Activated CD4-positive, alpha-beta T cell treated with anti-CD3 and anti-CD28 coated beads for 36 hours (primary cell): ENCODE measurements at regions of chr6 and their contacts with region 1.

Region 1: DNA sequence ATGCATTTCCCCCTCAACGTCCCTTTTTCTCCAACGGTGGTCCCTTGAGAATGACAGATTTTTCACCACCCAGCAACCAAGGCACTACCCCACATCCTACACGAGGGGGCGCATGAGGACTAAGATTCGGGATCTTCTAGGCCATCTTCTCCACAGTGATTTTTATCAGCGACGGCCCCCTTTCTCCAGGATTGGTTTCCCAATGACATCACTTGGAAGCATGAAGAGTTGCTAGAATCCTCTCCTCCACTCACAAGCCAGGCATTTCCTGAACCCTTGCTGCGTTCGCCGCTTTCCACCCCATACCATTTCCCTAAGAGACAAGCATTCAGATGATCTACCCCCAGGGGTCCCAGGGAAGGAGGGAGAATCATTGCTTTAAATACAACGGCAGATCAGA is 252.0 kb downstream of the HIVEP2 start:
- DNase-seq: peak; percentile 79
- ATAC-seq: peak; percentile 75
- H3K4me3 Mint-ChIP-seq: no peak overlapping the region
- H3K27ac Mint-ChIP-seq: peak overlapping the region; percentile 62
- H3K4me1 Mint-ChIP-seq: peaks cover 27% of the 10 kb centered on the region
- H3K27me3 Mint-ChIP-seq: no peaks in the 10 kb centered on the region

Region 2: DNA sequence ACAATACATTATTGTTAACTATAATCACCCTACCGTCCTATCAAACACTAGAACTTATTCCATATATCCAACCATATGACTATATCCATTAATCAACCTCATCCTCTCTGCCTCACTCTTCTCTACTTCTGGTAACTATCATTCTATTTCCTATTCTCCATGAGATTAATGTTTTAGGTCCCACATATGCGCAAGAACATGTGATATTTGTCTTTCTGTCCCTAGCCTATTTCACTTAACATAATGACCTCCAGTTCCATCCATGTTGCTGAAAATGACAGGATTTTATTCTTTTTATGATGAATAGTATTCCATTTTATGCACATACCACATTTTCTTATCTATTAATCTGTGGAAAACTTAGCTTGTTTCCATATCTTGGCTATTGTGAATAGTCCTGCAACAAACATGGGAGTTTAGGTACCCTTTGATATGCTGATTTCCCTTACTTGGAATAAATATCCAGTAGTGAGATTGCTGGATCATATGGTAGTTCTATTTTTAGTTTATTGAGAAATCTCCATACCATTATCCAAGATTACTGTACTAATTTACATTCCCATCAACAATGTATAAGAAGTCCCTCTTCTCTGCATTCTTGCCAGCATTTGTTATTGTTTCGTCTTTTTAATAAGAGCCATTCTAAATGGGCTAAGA is 849.6 kb before region 1 on chr6:
- CTCF ChIA-PET with region 1: no interaction called
- POLR2A ChIA-PET with region 1: no interaction called
- intact Hi-C with region 1: no loop called
- DNase-seq: no peak
- ATAC-seq: no peak
- H3K4me3 Mint-ChIP-seq: no peak overlapping the region
- H3K27ac Mint-ChIP-seq: no peak overlapping the region
- H3K4me1 Mint-ChIP-seq: peaks cover 16% of the 10 kb centered on the region
- H3K27me3 Mint-ChIP-seq: no peaks in the 10 kb centered on the region

Region 3: GRCh38 chr6:142679907-142680700 is 12.8 kb before region 1 on chr6:
- CTCF ChIA-PET with region 1: interaction called, 11 read pairs
- POLR2A ChIA-PET with region 1: no interaction called
- intact Hi-C with region 1: no loop called
- DNase-seq: peak; percentile 61
- ATAC-seq: peak; percentile 83
- H3K4me3 Mint-ChIP-seq: no peak overlapping the region
- H3K27ac Mint-ChIP-seq: no peak overlapping the region
- H3K4me1 Mint-ChIP-seq: peaks cover 18% of the 10 kb centered on the region
- H3K27me3 Mint-ChIP-seq: no peaks in the 10 kb centered on the region

Region 4: GRCh38 chr6:142756215-142756634 is 63.3 kb after region 1 on chr6:
- CTCF ChIA-PET with region 1: no interaction called
- POLR2A ChIA-PET with region 1: no interaction called
- intact Hi-C with region 1: no loop called
- DNase-seq: no peak
- ATAC-seq: peak; percentile 68
- H3K4me3 Mint-ChIP-seq: no peak overlapping the region
- H3K27ac Mint-ChIP-seq: peak overlapping the region; percentile 66
- H3K4me1 Mint-ChIP-seq: peaks cover 29% of the 10 kb centered on the region
- H3K27me3 Mint-ChIP-seq: no peaks in the 10 kb centered on the region

Region 5: GRCh38 chr6:142863981-142864380 is 171.0 kb after region 1 on chr6:
- CTCF ChIA-PET with region 1: no interaction called
- POLR2A ChIA-PET with region 1: no interaction called
- intact Hi-C with region 1: no loop called
- DNase-seq: no peak
- ATAC-seq: no peak
- H3K4me3 Mint-ChIP-seq: no peak overlapping the region
- H3K27ac Mint-ChIP-seq: no peak overlapping the region
- H3K4me1 Mint-ChIP-seq: peaks cover 79% of the 10 kb centered on the region
- H3K27me3 Mint-ChIP-seq: no peaks in the 10 kb centered on the region

Region 6: GRCh38 chr6:143026696-143027449 is 333.9 kb after region 1 on chr6:
- CTCF ChIA-PET with region 1: interaction called, 41 read pairs
- POLR2A ChIA-PET with region 1: no interaction called
- intact Hi-C with region 1: loop called (anchors 1 kb)
- DNase-seq: peak; percentile 76
- ATAC-seq: peak; percentile 83
- H3K4me3 Mint-ChIP-seq: no peak overlapping the region
- H3K27ac Mint-ChIP-seq: no peak overlapping the region
- H3K4me1 Mint-ChIP-seq: peaks cover 5% of the 10 kb centered on the region
- H3K27me3 Mint-ChIP-seq: no peaks in the 10 kb centered on the region

Region 7: DNA sequence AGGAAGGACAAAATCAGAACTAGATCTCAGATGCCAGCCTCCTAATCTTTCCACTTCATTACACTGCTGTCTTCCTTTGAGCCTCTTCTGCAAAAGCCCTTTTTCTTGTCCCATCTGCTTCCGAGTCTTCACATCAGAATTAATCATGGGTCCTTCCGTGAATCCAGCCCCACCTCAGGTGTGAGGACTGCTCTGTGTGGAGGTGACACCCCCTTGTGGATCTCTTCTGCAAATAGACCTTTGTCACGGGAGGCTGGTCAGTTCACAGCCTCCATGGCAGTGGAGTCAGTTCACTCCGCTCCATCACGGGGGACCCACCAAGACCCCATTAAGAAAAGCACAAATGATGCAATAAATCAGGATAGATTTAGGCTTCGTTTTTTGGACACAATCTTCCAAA is 586.4 kb after region 1 on chr6:
- CTCF ChIA-PET with region 1: interaction called, 8 read pairs
- POLR2A ChIA-PET with region 1: no interaction called
- intact Hi-C with region 1: loop called (anchors 2 kb)
- DNase-seq: peak; percentile 17
- ATAC-seq: no peak
- H3K4me3 Mint-ChIP-seq: no peak overlapping the region
- H3K27ac Mint-ChIP-seq: no peak overlapping the region
- H3K4me1 Mint-ChIP-seq: peaks cover 3% of the 10 kb centered on the region
- H3K27me3 Mint-ChIP-seq: no peaks in the 10 kb centered on the region

Region 8: GRCh38 chr6:143337201-143337949 is 644.4 kb after region 1 on chr6:
- CTCF ChIA-PET with region 1: interaction called, 9 read pairs
- POLR2A ChIA-PET with region 1: no interaction called
- intact Hi-C with region 1: loop called (anchors 1 to 2 kb)
- DNase-seq: peak; percentile 74
- ATAC-seq: peak; percentile 63
- H3K4me3 Mint-ChIP-seq: no peak overlapping the region
- H3K27ac Mint-ChIP-seq: no peak overlapping the region
- H3K4me1 Mint-ChIP-seq: peaks cover 5% of the 10 kb centered on the region
- H3K27me3 Mint-ChIP-seq: no peaks in the 10 kb centered on the region

Region 9: DNA sequence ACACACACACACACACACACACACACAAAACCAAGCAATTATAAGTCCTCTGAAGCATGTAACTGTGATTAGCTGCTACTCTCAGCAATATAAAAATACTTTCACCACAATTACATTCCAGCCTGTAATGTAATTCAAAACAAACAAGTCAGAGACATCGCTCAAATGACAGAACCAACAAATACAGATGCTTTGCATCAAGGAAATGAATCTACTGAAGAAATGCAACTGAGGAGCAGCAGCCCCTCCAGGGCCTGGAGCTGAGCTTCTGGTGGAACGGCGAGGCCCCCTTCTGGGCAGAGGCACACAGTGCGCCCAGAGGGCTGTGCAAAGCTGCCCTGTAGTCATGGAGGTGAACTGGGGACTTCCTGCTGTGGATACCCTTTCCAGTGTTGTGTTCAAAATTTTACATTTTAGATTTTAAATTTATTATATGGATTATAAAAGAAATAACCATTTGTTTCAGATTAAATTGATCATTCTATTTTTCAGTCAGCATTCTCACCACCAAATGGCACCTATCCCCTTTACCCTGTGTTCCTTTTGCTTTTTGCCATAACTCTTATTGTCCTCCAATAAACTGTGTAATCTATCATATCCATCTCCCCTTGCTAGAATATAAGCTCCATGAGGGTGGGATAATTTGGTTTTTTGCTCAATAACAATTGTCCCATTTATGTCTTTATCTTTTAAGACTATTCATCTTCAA is 734.3 kb after region 1 on chr6:
- CTCF ChIA-PET with region 1: interaction called, 13 read pairs
- POLR2A ChIA-PET with region 1: no interaction called
- intact Hi-C with region 1: loop called (anchors 1 kb)
- DNase-seq: peak; percentile 86
- ATAC-seq: peak; percentile 100
- H3K4me3 Mint-ChIP-seq: no peak overlapping the region
- H3K27ac Mint-ChIP-seq: no peak overlapping the region
- H3K4me1 Mint-ChIP-seq: peaks cover 7% of the 10 kb centered on the region
- H3K27me3 Mint-ChIP-seq: no peaks in the 10 kb centered on the region